Esophagus muscularis mucosa (tissue), 4 donors: ENCODE measurements at regions of chr1 and their contacts with region 1.

Region 1: DNA sequence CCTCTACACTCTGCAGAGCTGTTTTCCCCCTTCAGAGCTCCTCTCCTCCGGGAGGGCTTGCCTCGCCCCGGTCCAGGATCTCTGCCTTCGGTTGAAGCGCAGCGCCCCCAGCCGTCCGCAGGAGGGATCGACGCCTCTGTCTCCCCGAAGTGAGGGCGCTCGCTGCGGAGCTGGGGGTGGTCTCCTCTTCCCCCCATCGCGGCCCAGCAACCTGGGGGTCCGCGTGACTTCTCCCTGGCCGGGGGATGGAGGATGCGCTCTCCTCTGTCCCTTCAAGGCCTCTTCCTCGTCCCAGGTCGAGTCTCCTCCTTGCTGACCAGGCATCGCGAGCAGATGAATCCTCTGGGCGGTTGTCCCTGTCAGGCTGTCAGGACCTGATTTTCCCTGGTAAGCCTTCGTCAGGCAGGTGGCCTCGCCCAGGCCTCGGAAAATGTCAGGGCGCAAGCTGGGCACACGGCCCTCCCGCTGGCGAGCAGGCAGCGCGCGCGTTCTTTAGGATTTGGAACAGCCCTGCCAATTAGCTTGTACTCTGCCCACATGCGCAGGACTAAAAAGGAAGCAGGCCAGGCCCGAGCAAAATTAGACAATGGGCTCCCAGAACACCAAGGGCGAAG is 90.5 kb downstream of the EDEM3 start:
- DNase-seq: peak; percentile 92
- H3K4me3 ChIP-seq: peak overlapping the region; percentile 42 to 46 (median 44)
- H3K27ac ChIP-seq: peak overlapping the region in 1 of 4 donors; percentile 59
- H3K4me1 ChIP-seq: peaks cover 3 to 28% (median 19%) of the 10 kb centered on the region in 4 donors
- H3K27me3 ChIP-seq: no peaks in the 10 kb centered on the region
- CTCF ChIP-seq: peak; percentile 95 to 96 (median 95)
- EP300 ChIP-seq: no peak
- POLR2A ChIP-seq: no peak

Region 2: DNA sequence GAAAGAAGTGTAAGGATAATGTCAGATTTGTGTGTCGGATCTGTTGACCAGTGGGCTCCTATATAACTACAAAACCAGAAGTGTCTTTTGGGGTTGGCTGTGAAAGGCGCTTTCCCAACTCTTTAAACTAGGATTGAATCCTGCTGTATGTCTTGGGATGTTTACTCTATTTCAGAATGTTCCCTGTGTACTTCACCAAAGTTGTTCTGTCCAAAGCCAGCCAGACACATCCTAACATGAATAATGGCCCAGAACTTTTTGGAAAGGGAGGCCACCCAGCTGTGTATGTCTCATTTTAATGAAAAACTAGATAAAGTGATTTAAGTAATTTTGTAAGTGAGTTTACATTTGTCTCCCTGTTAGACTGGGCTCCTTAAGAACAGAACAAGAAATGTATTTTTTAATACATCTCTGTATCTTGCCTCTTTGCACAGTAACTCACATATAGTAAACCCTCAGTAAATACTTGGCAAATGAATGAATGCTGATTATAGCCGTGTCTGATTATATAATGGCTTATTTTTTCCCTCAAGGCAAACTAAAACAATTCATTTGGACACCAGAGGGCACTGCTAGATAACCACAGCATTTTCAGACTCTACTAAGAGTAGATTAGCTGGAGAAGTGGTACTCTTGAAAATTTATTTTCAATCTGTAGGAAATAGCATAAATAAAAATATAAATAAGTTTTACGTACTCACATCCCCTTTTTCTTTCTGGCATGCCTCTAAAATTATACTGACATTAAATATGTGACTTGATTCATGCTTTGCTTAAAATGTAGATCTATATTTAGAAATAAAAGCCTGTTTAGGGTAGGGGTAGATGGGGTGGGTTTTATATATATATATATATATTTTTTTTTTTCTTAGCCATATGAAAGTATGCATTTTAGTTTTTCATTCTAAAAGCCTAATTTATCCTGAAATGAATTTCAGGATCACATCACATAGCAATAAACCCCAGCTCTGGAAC is 588.8 kb before region 1 on chr1:
- intact Hi-C with region 1: loop called (anchors 5 kb)
- DNase-seq: no peak
- H3K4me3 ChIP-seq: no peak overlapping the region
- H3K27ac ChIP-seq: peak overlapping the region; percentile 29 to 58 (median 39)
- H3K4me1 ChIP-seq: peaks cover 12 to 45% (median 33%) of the 10 kb centered on the region in 4 donors
- H3K27me3 ChIP-seq: no peaks in the 10 kb centered on the region
- CTCF ChIP-seq: peak; percentile 77 to 83 (median 77)
- EP300 ChIP-seq: no peak
- POLR2A ChIP-seq: no peak

Region 3: GRCh38 chr1:184222652-184223052 is 441.5 kb before region 1 on chr1:
- intact Hi-C with region 1: loop called (anchors 10 kb)
- DNase-seq: no peak
- H3K4me3 ChIP-seq: peak overlapping the region in 1 of 4 donors; percentile 40
- H3K27ac ChIP-seq: no peak overlapping the region
- H3K4me1 ChIP-seq: peaks cover 0 to 10% (median 7%) of the 10 kb centered on the region in 4 donors
- H3K27me3 ChIP-seq: no peaks in the 10 kb centered on the region
- CTCF ChIP-seq: peak; percentile 90 to 95 (median 92)
- EP300 ChIP-seq: no peak
- POLR2A ChIP-seq: no peak

Region 4: GRCh38 chr1:184386312-184387068 is 277.7 kb before region 1 on chr1 and contains the start of gene C1orf21:
- intact Hi-C with region 1: loop called (anchors 5 kb)
- DNase-seq: peak; percentile 95
- H3K4me3 ChIP-seq: peak within 1 kb of the TSS; percentile 81 to 96 (median 94)
- H3K27ac ChIP-seq: peak within 1 kb of the TSS; percentile 91 to 97 (median 92)
- H3K4me1 ChIP-seq: peaks cover 23 to 42% (median 38%) of the 10 kb centered on the region in 4 donors
- H3K27me3 ChIP-seq: no peaks in the 10 kb centered on the region
- CTCF ChIP-seq: no peak
- EP300 ChIP-seq: no peak
- POLR2A ChIP-seq: peak; percentile 87
- total RNA-seq, gene C1orf21: 39.5 to 91.7 (median 58.8) TPM

Region 5: GRCh38 chr1:184563308-184563707 is 100.8 kb before region 1 on chr1:
- intact Hi-C with region 1: loop called (anchors 5 kb)
- DNase-seq: no peak
- H3K4me3 ChIP-seq: no peak overlapping the region
- H3K27ac ChIP-seq: peak overlapping the region in 1 of 4 donors; percentile 70
- H3K4me1 ChIP-seq: peaks cover 24 to 31% (median 29%) of the 10 kb centered on the region in 4 donors
- H3K27me3 ChIP-seq: no peaks in the 10 kb centered on the region
- CTCF ChIP-seq: peak; percentile 62 to 67 (median 63)
- EP300 ChIP-seq: no peak
- POLR2A ChIP-seq: no peak